PC-3 (cell line): ENCODE measurements at regions of chr14 and their contacts with region 1.

Region 1: DNA sequence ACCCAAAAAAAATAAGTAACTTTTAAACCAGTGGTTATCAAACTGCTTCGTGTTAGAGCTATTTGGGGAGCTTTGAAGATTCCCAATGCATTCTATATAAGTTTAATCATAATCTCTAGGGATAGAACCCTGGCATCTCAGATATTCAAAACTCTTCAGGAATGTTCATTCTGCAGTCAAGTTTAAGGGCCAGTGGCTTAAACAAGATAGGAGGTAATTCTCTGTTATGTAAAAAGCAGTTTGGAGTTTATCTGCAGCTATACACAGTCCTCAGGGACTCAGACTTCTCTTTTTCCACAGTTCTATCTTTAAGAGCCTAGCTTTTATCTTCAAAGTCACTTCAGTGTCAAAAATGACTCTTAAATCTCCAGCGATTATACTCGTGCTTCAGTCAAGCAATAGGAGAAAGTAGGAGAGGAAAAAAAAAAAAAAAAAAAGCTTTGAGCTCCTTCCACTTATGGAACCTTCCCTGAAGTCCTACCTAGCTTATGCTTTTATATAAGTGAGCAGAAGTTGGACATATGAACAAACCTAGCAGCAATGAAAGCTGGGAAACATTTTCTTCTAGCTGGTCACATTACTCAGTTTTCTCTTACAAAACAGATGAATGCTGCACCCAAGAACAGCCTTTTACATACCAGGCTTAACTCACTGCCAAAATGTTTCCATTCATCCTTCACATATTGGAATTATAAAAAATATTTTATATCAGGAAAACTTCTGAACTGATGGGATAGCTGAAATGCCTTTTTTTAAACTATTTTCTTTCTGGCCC is 302.8 kb downstream of the FSCB start:
- DNase-seq: no peak
- ATAC-seq: no peak
- H3K4me3 ChIP-seq: no peak overlapping the region
- H3K27ac ChIP-seq: no peak overlapping the region
- H3K4me1 ChIP-seq: no peaks in the 10 kb centered on the region
- H3K27me3 ChIP-seq: no peaks in the 10 kb centered on the region
- CTCF ChIP-seq: no peak

Region 2: DNA sequence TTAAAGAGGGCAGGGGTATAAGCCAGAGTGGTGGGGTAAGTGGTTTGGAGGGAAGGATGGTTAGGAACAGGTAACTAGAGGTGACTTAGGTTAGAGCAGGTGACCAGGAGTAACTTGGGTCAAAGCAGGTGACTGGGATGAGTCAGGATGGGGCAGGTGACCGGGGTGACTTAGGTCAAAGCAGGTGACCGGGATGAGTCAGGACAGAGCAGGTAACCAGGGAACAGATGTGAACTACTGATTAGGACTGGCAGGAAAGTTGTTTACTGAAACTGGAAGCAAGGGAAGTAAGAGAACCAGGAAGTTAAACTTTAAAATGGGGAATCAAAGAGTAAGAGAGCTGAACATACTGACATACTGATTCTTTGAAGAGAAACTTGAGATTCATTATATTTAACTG is 245.4 kb after region 1 on chr14:
- CTCF ChIA-PET with region 1: no interaction called
- POLR2A ChIA-PET with region 1: no interaction called
- intact Hi-C with region 1: loop called (anchors 10 kb)
- DNase-seq: no peak
- ATAC-seq: no peak
- H3K4me3 ChIP-seq: no peak overlapping the region
- H3K27ac ChIP-seq: no peak overlapping the region
- H3K4me1 ChIP-seq: no peaks in the 10 kb centered on the region
- H3K27me3 ChIP-seq: no peaks in the 10 kb centered on the region
- CTCF ChIP-seq: no peak